ENCODE measurements at regions of chr2 and their contacts with region 1.

Region 1: DNA sequence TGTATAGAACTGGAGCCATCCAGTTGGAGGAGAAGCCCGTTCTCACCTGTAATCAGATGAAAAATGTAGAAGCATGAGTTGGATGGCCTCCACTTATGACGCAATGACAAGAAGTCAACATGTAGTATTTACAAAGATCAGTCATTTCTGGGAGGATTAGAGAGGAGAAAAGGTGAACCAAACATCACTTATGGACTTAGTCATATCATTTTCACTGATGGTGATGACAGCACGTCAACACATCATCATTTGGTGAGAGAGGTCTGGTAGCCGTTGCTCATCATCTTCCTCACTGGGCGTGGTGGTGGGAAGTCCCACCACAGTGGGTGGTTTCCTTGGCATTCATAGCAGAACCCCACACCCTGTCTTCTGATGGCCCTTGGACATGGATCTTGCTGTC is 264.2 kb upstream of the EPAS1 start:
- DNase-seq: peak; percentile 88
- H3K4me3 Mint-ChIP-seq: no peak overlapping the region
- H3K27ac Mint-ChIP-seq: peak overlapping the region; percentile 76
- H3K4me1 Mint-ChIP-seq: peaks cover 28% of the 10 kb centered on the region
- H3K27me3 Mint-ChIP-seq: no peaks in the 10 kb centered on the region

Region 2: GRCh38 chr2:46018773-46019591 is 14.0 kb before region 1 on chr2:
- CTCF ChIA-PET with region 1: interaction called, 5 read pairs
- POLR2A ChIA-PET with region 1: interaction called, 19 read pairs
- intact Hi-C with region 1: loop called (anchors 1 kb)
- DNase-seq: peak; percentile 37
- H3K4me3 Mint-ChIP-seq: no peak overlapping the region
- H3K27ac Mint-ChIP-seq: peak overlapping the region; percentile 85
- H3K4me1 Mint-ChIP-seq: peaks cover 36% of the 10 kb centered on the region
- H3K27me3 Mint-ChIP-seq: no peaks in the 10 kb centered on the region

Region 3: DNA sequence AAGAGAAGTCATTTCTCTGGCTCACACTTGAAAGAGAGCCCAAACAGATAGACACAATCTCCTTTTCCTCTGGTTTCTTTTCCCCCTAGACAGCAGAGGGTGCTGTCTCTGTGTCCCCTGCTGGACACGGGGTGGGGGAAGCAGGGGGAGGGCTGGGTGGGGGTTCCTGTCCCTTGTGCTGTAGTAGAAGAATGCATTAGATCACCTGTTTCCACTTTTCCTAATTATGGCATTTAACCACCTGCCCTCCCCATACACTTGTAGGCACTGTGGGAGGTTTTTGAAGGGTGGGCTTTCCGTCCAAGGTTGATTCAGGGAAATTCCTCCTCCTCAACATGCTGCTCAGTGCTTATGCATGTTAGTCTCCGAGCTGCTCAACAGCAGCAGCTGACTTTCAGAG is 58.0 kb after region 1 on chr2:
- CTCF ChIA-PET with region 1: no interaction called
- POLR2A ChIA-PET with region 1: no interaction called
- intact Hi-C with region 1: loop called (anchors 5 kb)
- DNase-seq: no peak
- H3K4me3 Mint-ChIP-seq: no peak overlapping the region
- H3K27ac Mint-ChIP-seq: no peak overlapping the region
- H3K4me1 Mint-ChIP-seq: peaks cover 12% of the 10 kb centered on the region
- H3K27me3 Mint-ChIP-seq: no peaks in the 10 kb centered on the region